Caco-2 (cell line): ENCODE measurements at regions of chr12 and their contacts with region 1.

Region 1: DNA sequence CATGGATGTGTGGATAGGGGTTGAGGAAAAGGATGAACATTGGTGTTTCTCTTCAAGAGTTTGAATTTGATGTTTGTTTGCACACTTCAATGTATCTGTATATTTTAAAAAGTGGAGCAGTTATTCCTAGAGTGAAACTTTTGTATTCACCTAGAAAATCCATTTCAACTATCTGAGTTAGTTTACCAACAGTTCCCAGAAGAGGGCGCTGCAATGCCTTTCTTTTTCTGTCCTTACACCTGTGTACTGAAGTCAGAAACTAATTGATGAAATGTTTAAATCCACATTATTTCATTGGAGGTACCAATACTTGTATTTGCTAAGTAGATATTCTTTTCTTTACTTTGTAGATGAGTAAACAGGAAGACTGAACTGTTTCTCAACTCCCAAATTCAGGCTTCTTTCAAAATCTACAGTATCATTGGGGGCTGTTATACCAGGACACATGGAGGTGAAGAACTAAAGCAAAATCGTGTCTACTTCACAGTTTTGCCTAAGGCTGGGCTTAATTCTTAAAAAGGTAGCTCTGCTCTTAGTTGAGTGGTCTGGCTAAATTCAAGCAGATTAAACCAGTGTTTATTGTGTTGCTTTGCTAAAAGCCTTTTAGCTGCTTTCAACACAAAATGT is 26.6 kb upstream of the KLRB1 start:
- DNase-seq: peak in 1 of 2 experiments; percentile 74
- H3K4me3 ChIP-seq: no peak overlapping the region
- H3K4me3 Mint-ChIP-seq: no peak overlapping the region
- H3K27ac Mint-ChIP-seq: no peak overlapping the region
- H3K4me1 ChIP-seq: peaks cover 33% of the 10 kb centered on the region
- H3K4me1 Mint-ChIP-seq: peaks cover 23% of the 10 kb centered on the region
- H3K27me3 ChIP-seq: no peaks in the 10 kb centered on the region
- H3K27me3 Mint-ChIP-seq: no peaks in the 10 kb centered on the region
- CTCF ChIP-seq: peak; percentile 80 to 92

Region 2: DNA sequence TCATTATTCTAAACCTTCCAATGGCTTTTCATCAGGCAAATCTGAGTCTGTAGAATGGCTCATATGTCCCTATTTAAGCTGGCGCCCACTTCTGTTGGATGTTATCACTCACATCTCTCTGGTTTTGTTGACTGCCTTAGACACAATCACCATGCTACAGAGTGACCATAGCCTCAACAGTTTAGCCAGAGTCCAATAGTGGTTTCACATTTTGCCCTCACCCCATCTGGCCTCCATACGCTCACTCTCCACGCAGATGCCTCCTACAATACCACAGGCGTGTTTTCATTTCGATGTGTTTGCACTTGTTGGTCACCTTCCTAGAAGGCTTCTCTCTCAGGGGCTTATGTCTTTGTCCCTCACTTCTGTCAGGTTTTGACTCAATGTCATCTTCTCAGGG is 30.0 kb before region 1 on chr12:
- CTCF ChIA-PET with region 1: no interaction called
- POLR2A ChIA-PET with region 1: no interaction called
- intact Hi-C with region 1: loop called (anchors 1 kb)
- DNase-seq: no peak
- H3K4me3 ChIP-seq: no peak overlapping the region
- H3K4me3 Mint-ChIP-seq: no peak overlapping the region
- H3K27ac Mint-ChIP-seq: no peak overlapping the region
- H3K4me1 ChIP-seq: peaks cover 20% of the 10 kb centered on the region
- H3K4me1 Mint-ChIP-seq: peaks cover 21% of the 10 kb centered on the region
- H3K27me3 ChIP-seq: no peaks in the 10 kb centered on the region
- H3K27me3 Mint-ChIP-seq: no peaks in the 10 kb centered on the region
- CTCF ChIP-seq: no peak

Region 3: GRCh38 chr12:9647825-9648700 is 13.8 kb after region 1 on chr12:
- CTCF ChIA-PET with region 1: interaction called, 16 read pairs
- POLR2A ChIA-PET with region 1: no interaction called
- intact Hi-C with region 1: loop called (anchors 1 kb)
- DNase-seq: peak; percentile 93 to 94
- H3K4me3 ChIP-seq: peak overlapping the region; percentile 51
- H3K4me3 Mint-ChIP-seq: peak overlapping the region; percentile 98
- H3K27ac Mint-ChIP-seq: peak overlapping the region; percentile 96
- H3K4me1 ChIP-seq: peaks cover 24% of the 10 kb centered on the region
- H3K4me1 Mint-ChIP-seq: peaks cover 40% of the 10 kb centered on the region
- H3K27me3 ChIP-seq: no peaks in the 10 kb centered on the region
- H3K27me3 Mint-ChIP-seq: no peaks in the 10 kb centered on the region
- CTCF ChIP-seq: no peak

Region 4: DNA sequence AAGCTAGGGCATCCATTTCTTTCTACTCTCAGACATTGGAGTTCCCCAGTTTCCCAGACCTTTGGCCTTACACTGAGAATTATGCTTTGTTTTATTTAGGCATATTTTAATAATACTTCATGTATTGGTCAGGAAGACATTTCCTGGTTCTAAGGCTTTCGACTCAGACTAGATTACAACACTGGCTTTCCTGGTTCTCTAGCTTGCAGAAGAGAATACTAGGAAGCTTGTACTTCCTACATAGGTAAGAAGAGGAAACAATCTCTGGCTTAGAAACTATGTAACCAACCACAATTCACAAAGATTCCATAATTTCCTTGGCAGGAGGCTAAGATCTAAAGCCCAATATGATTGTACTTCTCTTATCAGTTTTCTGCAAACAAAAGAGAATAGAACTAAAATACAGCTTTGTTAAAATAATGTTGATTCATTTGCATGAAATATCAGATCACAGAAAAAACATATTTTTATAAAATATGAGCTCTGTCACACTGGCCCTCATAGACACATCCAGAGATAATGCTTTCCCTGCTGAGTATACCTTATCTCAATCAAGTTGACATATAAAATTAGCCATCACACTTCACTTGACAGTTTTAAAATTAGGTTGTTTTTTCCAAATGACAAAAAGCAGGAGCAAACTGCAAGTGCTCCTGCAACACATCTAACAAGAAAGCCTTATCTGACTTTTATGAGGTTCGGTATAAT is 65.8 kb after region 1 on chr12:
- CTCF ChIA-PET with region 1: no interaction called
- POLR2A ChIA-PET with region 1: no interaction called
- intact Hi-C with region 1: loop called (anchors 1 kb)
- DNase-seq: no peak
- H3K4me3 ChIP-seq: no peak overlapping the region
- H3K4me3 Mint-ChIP-seq: no peak overlapping the region
- H3K27ac Mint-ChIP-seq: no peak overlapping the region
- H3K4me1 ChIP-seq: no peaks in the 10 kb centered on the region
- H3K4me1 Mint-ChIP-seq: no peaks in the 10 kb centered on the region
- H3K27me3 ChIP-seq: no peaks in the 10 kb centered on the region; the same call in 1 of the 2 replicates
- H3K27me3 Mint-ChIP-seq: peaks cover 7% of the 10 kb centered on the region
- CTCF ChIP-seq: no peak

Region 5: DNA sequence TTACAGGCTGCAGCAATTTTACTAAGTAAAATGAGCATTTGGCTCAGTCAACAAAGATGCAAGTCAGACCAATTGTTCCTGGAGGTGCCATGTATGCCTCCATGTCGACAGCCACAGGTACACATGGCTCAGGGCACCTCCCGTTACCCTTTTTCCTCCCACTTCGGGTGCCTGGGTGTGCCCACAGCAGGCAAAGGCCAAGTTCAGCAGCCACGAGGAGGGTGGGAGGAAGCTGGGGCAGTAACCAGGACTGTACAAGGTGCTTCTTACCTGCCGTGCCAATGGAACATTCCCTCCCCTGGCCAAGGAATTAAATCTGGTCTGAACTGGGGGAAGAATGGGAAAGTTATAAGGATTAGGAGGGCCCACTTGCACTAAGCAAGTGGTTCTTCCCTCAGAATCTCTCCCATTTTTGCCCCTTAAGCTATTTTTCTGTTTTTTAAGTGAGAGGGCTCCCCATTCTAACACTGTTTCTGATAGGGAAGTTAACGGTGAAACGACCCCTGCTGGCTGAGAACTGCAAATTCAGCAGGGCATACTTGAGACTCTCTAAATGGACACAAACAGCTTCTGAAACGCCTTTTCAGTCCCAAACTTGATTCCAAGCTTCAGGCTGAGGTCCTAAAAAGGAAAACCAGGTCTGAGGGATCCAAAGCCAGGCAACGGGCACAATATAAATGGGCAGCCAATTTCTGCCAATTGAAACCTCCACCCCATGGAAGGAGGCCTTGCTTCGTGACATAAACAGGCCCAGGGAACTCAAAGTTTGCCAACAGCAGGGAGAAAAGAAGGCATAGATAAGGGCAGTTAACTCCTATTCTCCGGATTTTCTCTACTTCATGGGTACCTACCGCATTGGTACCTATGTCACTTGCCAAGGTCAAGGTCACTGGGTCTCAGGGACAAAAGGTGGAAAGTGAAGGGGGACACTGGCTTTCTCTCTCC is 73.8 kb after region 1 on chr12:
- CTCF ChIA-PET with region 1: interaction called, 9 read pairs
- POLR2A ChIA-PET with region 1: no interaction called
- intact Hi-C with region 1: loop called (anchors 1 kb)
- DNase-seq: peak; percentile 54 to 64
- H3K4me3 ChIP-seq: no peak overlapping the region
- H3K4me3 Mint-ChIP-seq: no peak overlapping the region
- H3K27ac Mint-ChIP-seq: no peak overlapping the region
- H3K4me1 ChIP-seq: peaks cover 4% of the 10 kb centered on the region
- H3K4me1 Mint-ChIP-seq: peaks cover 9% of the 10 kb centered on the region
- H3K27me3 ChIP-seq: no peaks in the 10 kb centered on the region
- H3K27me3 Mint-ChIP-seq: no peaks in the 10 kb centered on the region
- CTCF ChIP-seq: peak; percentile 96 to 98

Region 6: DNA sequence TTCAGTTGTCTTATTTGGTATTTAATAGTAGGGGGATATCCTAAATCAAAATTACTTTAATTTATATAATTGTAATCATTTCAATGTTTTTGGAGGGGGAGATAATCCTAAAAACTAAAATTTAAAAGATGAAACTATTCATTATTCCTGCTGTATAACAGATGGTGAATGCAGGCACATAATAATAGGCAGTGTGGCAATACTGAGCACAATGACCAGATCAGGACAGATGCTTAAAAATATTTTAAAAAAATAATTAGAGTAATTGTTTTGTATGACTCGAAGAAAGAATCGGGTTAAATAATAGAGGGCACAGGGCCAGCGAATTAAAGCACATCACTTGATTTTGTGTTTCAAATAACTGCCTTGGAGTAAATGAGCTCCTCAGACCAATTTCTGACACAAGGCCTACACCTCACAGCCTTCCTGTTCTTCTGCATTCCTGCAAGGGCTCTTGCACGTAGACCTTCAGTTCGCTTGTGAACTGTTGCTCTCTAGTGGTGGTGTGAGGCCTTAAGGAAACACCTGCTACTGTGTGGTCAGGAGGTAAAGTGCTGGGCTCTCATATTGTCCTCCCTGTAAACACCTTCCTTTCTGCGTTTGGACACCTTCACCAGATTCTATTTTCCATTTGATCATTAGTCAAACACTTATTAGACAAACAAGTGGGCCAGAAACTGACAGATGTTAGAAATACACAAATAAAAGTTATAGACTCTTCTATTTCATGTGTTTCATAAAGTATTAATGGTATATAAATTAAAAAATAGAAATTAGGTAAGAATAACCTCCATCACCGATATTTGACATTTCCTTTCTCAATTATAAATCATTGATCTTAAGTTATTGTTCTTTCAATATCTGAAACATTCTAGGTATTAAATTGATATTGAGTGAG is 163.7 kb after region 1 on chr12:
- CTCF ChIA-PET with region 1: interaction called, 7 read pairs
- POLR2A ChIA-PET with region 1: no interaction called
- intact Hi-C with region 1: loop called (anchors 1 kb)
- DNase-seq: peak; percentile 87 to 88
- H3K4me3 ChIP-seq: no peak overlapping the region
- H3K4me3 Mint-ChIP-seq: no peak overlapping the region
- H3K27ac Mint-ChIP-seq: no peak overlapping the region
- H3K4me1 ChIP-seq: no peaks in the 10 kb centered on the region
- H3K4me1 Mint-ChIP-seq: no peaks in the 10 kb centered on the region
- H3K27me3 ChIP-seq: no peaks in the 10 kb centered on the region
- H3K27me3 Mint-ChIP-seq: peaks cover 12% of the 10 kb centered on the region
- CTCF ChIP-seq: peak; percentile 67 to 84